ENCODE measurements at regions of chr9 and their contacts with region 1.

Region 1: DNA sequence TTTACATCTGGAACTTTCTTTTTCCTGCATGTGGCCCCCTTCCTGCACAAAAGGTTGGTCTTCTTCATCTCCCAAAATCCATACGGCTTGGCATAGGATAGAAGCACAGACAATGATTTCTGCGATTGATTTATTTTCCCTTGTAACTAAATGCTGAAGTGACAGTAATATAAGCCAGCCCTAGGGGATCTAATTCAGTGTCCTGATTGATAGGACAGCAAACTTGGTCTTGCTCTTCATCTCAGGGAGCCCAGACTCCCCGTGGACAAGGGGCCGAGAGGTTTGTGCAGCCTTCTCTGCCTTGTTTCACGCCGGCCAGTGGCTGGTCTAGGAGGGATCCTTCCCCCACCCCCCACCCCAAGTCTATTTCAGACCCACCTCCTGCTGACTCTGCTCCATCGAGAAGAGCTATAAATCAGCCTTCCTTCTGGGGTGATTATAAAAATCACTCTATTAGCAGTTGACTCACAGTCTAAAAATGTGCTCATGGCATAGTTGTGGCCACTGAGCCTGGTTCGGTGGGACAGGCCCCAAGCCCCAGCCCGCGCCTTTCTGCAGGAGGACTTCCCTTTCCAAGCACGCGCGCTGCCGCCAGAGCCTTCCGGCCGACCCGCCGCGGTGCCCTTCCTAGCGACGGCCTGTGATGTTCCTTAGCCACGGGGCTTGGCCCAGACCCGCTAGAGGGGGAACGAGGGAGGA is 89.8 kb upstream of the COL5A1 start:
- DNase-seq: peak in 1 of 2 donors; percentile 82
- H3K4me3 ChIP-seq: no peak overlapping the region
- H3K27ac ChIP-seq: peak overlapping the region; percentile 66 to 70
- H3K4me1 ChIP-seq: peaks cover 7 to 24% of the 10 kb centered on the region in 2 donors
- H3K27me3 ChIP-seq: no peaks in the 10 kb centered on the region
- CTCF ChIP-seq: no peak

Region 2: DNA sequence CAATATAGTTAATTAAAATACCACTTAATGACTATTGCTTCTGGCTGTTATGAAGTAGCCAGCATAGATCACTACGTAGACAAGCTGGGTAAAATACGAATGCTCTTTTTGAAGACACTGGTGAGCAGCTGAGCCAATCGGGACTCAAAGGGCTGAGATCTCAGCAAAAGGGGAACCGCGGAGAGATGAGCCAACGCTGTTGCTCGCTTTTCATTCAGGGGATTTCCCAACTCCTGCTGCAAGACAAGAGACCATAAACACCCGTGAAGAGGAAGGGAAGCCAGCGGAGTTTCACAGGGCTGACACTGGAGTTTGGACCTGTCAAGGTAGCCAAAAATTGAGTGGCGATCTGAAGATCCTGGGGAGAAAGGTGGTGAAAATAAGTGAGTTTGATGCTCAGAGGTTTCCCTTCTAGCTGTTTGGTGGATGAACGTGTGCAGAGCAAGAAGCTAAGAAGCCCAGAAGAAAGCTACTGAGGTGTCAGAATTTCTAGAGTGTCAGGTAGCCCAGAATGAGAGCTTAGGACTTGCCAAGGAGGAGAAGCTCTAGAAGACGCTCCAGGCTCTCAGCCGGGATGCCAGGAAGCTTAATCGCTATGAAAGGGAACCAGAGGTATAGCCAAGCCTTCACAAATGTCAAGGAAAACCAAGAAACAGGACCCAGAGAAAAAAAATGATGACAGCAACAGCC is 307.9 kb before region 1 on chr9:
- intact Hi-C with region 1: no loop called
- DNase-seq: no peak
- H3K4me3 ChIP-seq: no peak overlapping the region
- H3K27ac ChIP-seq: no peak overlapping the region
- H3K4me1 ChIP-seq: no peaks in the 10 kb centered on the region
- H3K27me3 ChIP-seq: no peaks in the 10 kb centered on the region
- CTCF ChIP-seq: no peak

Region 3: GRCh38 chr9:134475011-134475790 is 76.6 kb before region 1 on chr9:
- intact Hi-C with region 1: loop called (anchors 5 kb)
- DNase-seq: peak in 1 of 2 donors; percentile 88
- H3K4me3 ChIP-seq: peak overlapping the region in 1 of 2 donors; percentile 2
- H3K27ac ChIP-seq: peak overlapping the region; percentile 78 to 90
- H3K4me1 ChIP-seq: peaks cover 43 to 45% of the 10 kb centered on the region in 2 donors
- H3K27me3 ChIP-seq: no peaks in the 10 kb centered on the region
- CTCF ChIP-seq: no peak

Region 4: GRCh38 chr9:134781591-134782294 is 229.9 kb after region 1 on chr9:
- intact Hi-C with region 1: no loop called
- DNase-seq: no peak
- H3K4me3 ChIP-seq: no peak overlapping the region
- H3K27ac ChIP-seq: no peak overlapping the region
- H3K4me1 ChIP-seq: peaks cover 3 to 5% of the 10 kb centered on the region in 2 donors
- H3K27me3 ChIP-seq: no peaks in the 10 kb centered on the region
- CTCF ChIP-seq: no peak

Measured in ascending aorta (tissue), 2 donors.